Activated CD4-positive, alpha-beta T cell treated with anti-CD3 and anti-CD28 coated beads, Interleukin-2, amount 10 ng/mL, durations not matched to agents 7 days and 5 days (primary cell): ENCODE measurements at regions of chr14 and their contacts with region 1.

Region 1: GRCh38 chr14:91228112-91229004 is 16.1 kb downstream of the GPR68 start:
- DNase-seq: peak; percentile 84
- H3K4me3 Mint-ChIP-seq: peak overlapping the region; percentile 64
- H3K27ac Mint-ChIP-seq: peak overlapping the region; percentile 99
- H3K4me1 Mint-ChIP-seq: peaks cover 90% of the 10 kb centered on the region
- H3K27me3 Mint-ChIP-seq: no peaks in the 10 kb centered on the region

Region 2: GRCh38 chr14:91244501-91244901 is 16.1 kb after region 1 on chr14 and contains the start of gene GPR68:
- CTCF ChIA-PET with region 1: interaction called, 70 read pairs
- POLR2A ChIA-PET with region 1: interaction called, 66 read pairs
- DNase-seq: peak; percentile 51
- H3K4me3 Mint-ChIP-seq: peak within 1 kb of the TSS; percentile 92
- H3K27ac Mint-ChIP-seq: peak within 1 kb of the TSS; percentile 100
- H3K4me1 Mint-ChIP-seq: peaks cover 92% of the 10 kb centered on the region
- H3K27me3 Mint-ChIP-seq: no peaks in the 10 kb centered on the region
- total RNA-seq, gene GPR68: 32.7 to 33.0 TPM

Region 3: GRCh38 chr14:91249841-91250616 is 21.7 kb after region 1 on chr14:
- CTCF ChIA-PET with region 1: interaction called, 70 read pairs
- POLR2A ChIA-PET with region 1: interaction called, 66 read pairs
- DNase-seq: peak; percentile 63
- H3K4me3 Mint-ChIP-seq: peak overlapping the region; percentile 39
- H3K27ac Mint-ChIP-seq: peak overlapping the region; percentile 96
- H3K4me1 Mint-ChIP-seq: peaks cover 86% of the 10 kb centered on the region
- H3K27me3 Mint-ChIP-seq: no peaks in the 10 kb centered on the region

Region 4: DNA sequence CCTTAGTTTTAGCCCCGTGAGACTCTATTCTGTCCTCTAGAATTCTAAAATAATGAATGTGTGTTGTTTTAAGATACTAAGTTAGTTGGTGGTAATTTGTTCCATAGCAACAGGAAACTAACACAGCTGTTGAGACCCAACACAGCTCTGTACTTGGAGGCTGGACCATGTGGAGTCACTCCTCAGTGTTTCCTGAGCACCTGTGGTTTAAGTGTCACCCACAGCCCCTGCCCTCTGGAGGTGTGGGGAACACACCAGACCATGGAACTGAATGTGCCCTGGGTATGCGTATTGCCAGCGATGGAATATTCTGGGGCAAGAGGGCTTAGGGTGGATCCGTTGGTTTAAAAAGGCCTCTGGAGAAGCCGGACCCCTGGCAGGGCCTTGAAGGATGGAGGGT is 32.8 kb after region 1 on chr14:
- CTCF ChIA-PET with region 1: no interaction called
- POLR2A ChIA-PET with region 1: no interaction called
- DNase-seq: peak; percentile 66
- H3K4me3 Mint-ChIP-seq: no peak overlapping the region
- H3K27ac Mint-ChIP-seq: peak overlapping the region; percentile 63
- H3K4me1 Mint-ChIP-seq: peaks cover 84% of the 10 kb centered on the region
- H3K27me3 Mint-ChIP-seq: no peaks in the 10 kb centered on the region